HepG2 (cell line): ENCODE measurements at regions of chr2 and their contacts with region 1.

Region 1: GRCh38 chr2:75523313-75524275 is 37.1 kb downstream of the EVA1A start:
- DNase-seq: peak; percentile 100
- ATAC-seq: peak; percentile 78
- H3K4me3 ChIP-seq: peak overlapping the region; percentile 24 to 59 (median 51); a peak in 5 of 6 replicates
- H3K27ac ChIP-seq: peak overlapping the region; percentile 92
- H3K4me1 ChIP-seq: peaks cover 100% of the 10 kb centered on the region
- H3K27me3 ChIP-seq: no peaks in the 10 kb centered on the region
- CTCF ChIP-seq: no peak
- EP300 ChIP-seq: peak; percentile 95 to 98; a peak in 3 of 4 replicates
- POLR2A ChIP-seq: peak in 1 of 2 experiments; percentile 43; a peak in 2 of 4 replicates
- RAD21 ChIP-seq: no peak

Region 2: GRCh38 chr2:75466708-75467311 is 56.8 kb before region 1 on chr2:
- CTCF ChIA-PET with region 1: no interaction called
- POLR2A ChIA-PET with region 1: interaction called, 15 read pairs
- in situ Hi-C with region 1: no loop called
- intact Hi-C with region 1: loop called (anchors 2 kb)
- DNase-seq: peak; percentile 39
- ATAC-seq: peak; percentile 58
- H3K4me3 ChIP-seq: no peak overlapping the region
- H3K27ac ChIP-seq: no peak overlapping the region
- H3K4me1 ChIP-seq: peaks cover 28% of the 10 kb centered on the region
- H3K27me3 ChIP-seq: no peaks in the 10 kb centered on the region
- CTCF ChIP-seq: peak; percentile 61
- EP300 ChIP-seq: no peak
- POLR2A ChIP-seq: no peak
- RAD21 ChIP-seq: no peak; the same call in 1 of the 2 replicates

Region 3: GRCh38 chr2:75539955-75540716 is 16.5 kb after region 1 on chr2:
- CTCF ChIA-PET with region 1: no interaction called
- POLR2A ChIA-PET with region 1: interaction called, 35 read pairs
- in situ Hi-C with region 1: no loop called
- intact Hi-C with region 1: no loop called
- DNase-seq: no peak
- ATAC-seq: no peak
- H3K4me3 ChIP-seq: no peak overlapping the region
- H3K27ac ChIP-seq: no peak overlapping the region
- H3K4me1 ChIP-seq: peaks cover 85% of the 10 kb centered on the region
- H3K27me3 ChIP-seq: no peaks in the 10 kb centered on the region
- CTCF ChIP-seq: no peak
- EP300 ChIP-seq: no peak
- POLR2A ChIP-seq: no peak
- RAD21 ChIP-seq: no peak

Region 4: GRCh38 chr2:75553935-75554531 is 30.4 kb after region 1 on chr2:
- CTCF ChIA-PET with region 1: no interaction called
- POLR2A ChIA-PET with region 1: interaction called, 118 read pairs
- in situ Hi-C with region 1: no loop called
- intact Hi-C with region 1: no loop called
- DNase-seq: no peak
- ATAC-seq: no peak
- H3K4me3 ChIP-seq: 0 out of 6 replicates have a peak overlapping the region, but pooled peaks of 1 of the 3 experiments have one; percentile 4
- H3K27ac ChIP-seq: peak overlapping the region; percentile 27
- H3K4me1 ChIP-seq: peaks cover 100% of the 10 kb centered on the region
- H3K27me3 ChIP-seq: no peaks in the 10 kb centered on the region
- CTCF ChIP-seq: no peak
- EP300 ChIP-seq: 0 out of 4 replicates have a peak, but pooled peaks of 1 of the 2 experiments have one; percentile 30
- POLR2A ChIP-seq: no peak
- RAD21 ChIP-seq: no peak

Region 5: DNA sequence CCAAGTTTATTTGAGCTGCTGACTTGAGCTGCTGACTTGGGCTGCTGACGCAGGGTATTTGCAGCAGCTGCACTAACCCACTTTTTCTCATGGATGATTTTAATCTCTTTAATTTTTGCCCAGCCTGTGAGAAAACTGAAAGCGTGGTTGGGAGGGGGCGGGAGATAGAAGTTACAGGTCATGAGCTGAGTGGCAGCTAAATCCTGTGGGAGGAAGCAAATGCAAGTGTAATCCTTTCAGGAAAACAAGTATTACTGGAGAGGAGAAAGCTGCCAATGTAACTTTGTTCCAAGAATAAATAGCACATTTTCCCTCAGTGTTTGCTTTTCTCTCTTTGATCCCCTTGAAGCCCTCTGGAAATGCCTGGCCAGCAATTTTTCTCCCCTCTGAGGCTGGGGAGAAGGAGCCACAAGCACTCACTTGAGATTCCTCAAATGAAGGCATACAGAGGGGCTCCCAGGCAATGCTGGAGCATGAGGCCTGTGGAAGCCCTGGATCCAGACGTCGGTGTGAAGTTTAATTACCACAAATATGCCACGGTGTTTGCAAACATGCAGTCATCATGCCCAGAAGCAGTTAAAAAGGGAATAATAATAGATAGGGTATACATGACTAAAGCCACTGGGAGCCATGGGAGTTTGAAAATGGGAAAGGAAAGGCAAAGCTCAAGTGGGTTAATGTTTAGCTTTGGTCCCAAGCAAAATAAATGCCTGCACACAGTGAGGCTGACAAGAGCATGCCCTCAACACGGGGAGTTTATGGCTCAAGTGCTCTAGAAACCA is 47.5 kb after region 1 on chr2:
- CTCF ChIA-PET with region 1: no interaction called
- POLR2A ChIA-PET with region 1: interaction called, 70 read pairs
- in situ Hi-C with region 1: loop called (anchors 5 kb)
- intact Hi-C with region 1: loop called (anchors 1 kb)
- DNase-seq: peak; percentile 96
- ATAC-seq: peak; percentile 94
- H3K4me3 ChIP-seq: peak overlapping the region; percentile 39 to 54 (median 46)
- H3K27ac ChIP-seq: peak overlapping the region; percentile 95
- H3K4me1 ChIP-seq: peaks cover 75% of the 10 kb centered on the region
- H3K27me3 ChIP-seq: no peaks in the 10 kb centered on the region
- CTCF ChIP-seq: no peak
- EP300 ChIP-seq: peak in 1 of 2 experiments; percentile 95; a peak in 2 of 4 replicates
- POLR2A ChIP-seq: peak; percentile 49 to 82; a peak in 3 of 4 replicates
- RAD21 ChIP-seq: no peak; the same call in 1 of the 2 replicates

Region 6: DNA sequence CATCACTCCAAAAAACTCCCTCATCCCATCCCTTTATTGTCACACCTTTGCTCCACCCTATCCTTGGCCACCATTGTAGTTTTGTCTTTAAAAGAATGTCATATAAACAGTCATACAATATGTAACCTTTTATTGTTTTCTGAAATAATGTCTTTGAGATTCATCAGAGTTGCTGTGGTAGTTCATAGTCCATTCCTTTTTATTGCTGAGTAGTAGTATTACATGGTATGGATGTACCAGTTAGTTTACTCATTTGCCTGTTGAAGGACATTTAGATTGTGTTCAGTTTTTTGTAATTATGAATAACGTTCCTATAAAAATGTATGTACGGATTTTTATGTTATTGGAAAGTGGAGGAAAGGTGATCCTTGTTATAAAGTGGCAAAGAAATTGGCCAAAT is 358.9 kb after region 1 on chr2:
- CTCF ChIA-PET with region 1: no interaction called
- POLR2A ChIA-PET with region 1: no interaction called
- in situ Hi-C with region 1: no loop called
- intact Hi-C with region 1: no loop called
- DNase-seq: no peak
- ATAC-seq: no peak
- H3K4me3 ChIP-seq: no peak overlapping the region
- H3K27ac ChIP-seq: no peak overlapping the region
- H3K4me1 ChIP-seq: no peaks in the 10 kb centered on the region
- H3K27me3 ChIP-seq: no peaks in the 10 kb centered on the region
- CTCF ChIP-seq: no peak
- EP300 ChIP-seq: no peak
- POLR2A ChIP-seq: no peak
- RAD21 ChIP-seq: no peak